Tibial artery (tissue), 4 donors: ENCODE measurements at regions of chr16 and their contacts with region 1.

Region 1: DNA sequence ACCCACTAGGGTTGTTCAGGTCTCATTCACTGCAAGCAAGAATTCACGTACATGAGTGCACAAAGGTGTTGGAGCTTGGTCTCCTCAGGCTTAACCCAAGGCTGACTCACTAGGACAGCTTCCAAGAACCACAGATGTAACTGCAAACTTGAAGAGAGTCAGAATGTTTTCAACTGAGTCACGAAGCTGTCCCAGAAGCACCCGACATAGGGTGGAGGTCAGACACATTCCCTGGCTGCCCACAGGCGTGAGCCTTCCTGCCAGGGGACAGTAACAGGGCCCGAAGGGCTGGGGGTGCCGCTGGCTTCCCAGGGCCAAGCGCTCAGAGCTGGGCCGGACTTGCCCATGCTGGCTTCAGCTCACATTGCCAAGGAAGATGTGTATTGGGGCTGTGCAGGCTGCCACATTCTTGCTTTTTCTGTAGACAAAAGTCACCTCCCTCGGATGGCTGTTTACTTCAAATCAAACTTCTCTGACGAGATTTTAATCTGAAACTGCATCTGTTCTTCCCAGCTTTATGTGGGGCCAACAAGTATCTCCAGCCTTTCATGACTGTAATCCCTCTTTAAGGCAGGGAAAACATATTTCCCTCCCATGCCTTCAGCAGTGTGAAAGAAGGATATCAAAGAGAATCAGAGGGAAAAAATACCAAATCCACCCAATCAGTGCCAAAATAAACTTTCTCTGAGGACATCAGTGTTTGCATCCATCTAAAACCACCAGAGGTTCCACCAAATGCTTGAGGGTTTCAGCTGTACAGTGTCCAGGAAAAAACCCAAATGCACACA is 14.3 kb downstream of the CMTM3 start:
- DNase-seq: peak in 1 of 2 donors; percentile 79
- H3K4me3 ChIP-seq: no peak overlapping the region
- H3K27ac ChIP-seq: peak overlapping the region; percentile 24 to 41
- H3K4me1 ChIP-seq: peaks cover 0 to 18% (median 11%) of the 10 kb centered on the region in 4 donors
- H3K27me3 ChIP-seq: no peaks in the 10 kb centered on the region
- CTCF ChIP-seq: no peak

Region 2: GRCh38 chr16:66824006-66824405 is 205.2 kb after region 1 on chr16:
- intact Hi-C with region 1: loop called (anchors 10 kb)
- DNase-seq: no peak
- H3K4me3 ChIP-seq: no peak overlapping the region
- H3K27ac ChIP-seq: no peak overlapping the region
- H3K4me1 ChIP-seq: peaks cover 0 to 9% (median 4%) of the 10 kb centered on the region in 4 donors
- H3K27me3 ChIP-seq: no peaks in the 10 kb centered on the region
- CTCF ChIP-seq: no peak

Region 3: GRCh38 chr16:66862023-66862520 is 243.3 kb after region 1 on chr16:
- intact Hi-C with region 1: no loop called
- DNase-seq: no peak
- H3K4me3 ChIP-seq: no peak overlapping the region
- H3K27ac ChIP-seq: no peak overlapping the region
- H3K4me1 ChIP-seq: no peaks in the 10 kb centered on the region
- H3K27me3 ChIP-seq: no peaks in the 10 kb centered on the region
- CTCF ChIP-seq: no peak